ENCODE measurements at regions of chr7 and their contacts with region 1.

Region 1: DNA sequence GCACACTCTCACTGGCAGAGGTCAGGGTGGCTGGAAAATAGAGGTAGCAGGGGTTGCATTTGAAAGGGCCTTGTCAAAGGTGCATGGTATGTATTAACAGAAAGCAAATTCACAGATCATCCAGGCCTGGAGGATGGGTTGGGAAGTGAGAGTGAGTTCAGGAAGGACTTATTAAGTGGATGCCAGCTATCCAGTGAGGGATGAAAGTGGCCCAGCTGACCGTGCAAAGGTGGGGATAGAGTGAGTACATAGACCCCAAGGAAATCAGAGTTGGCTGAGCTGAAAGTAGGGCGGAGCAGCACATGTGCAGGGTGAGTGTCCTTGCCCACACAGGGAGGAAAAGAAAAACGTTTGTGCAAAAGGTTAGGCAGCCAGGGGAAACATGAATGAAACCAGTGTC is 58.1 kb downstream of the HECW1 start:
- DNase-seq: no peak

Region 2: GRCh38 chr7:42972699-42973500 is 197.7 kb before region 1 on chr7:
- intact Hi-C with region 1: loop called in 1 of 2 experiments (anchors 10 kb)
- DNase-seq: peak; percentile 87

Region 3: DNA sequence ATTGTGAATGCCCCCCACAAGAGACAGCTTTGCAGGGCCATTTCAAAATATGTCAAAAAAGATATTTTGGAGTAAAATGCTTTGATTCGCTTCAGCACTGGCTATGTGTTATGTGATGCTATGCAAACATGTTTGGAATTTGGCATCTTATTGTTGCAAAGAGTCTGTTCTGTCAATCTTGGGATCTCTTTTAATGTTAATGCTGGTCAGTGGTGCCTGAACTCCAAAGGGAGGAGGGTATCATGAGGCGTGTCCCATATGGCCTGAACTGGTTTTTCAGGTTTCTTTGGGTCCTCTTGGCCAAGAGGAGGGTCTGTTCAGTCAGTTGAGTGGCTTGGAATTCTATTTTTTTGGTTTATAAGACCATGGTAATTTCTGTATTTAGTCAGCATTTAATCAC is 23.3 kb after region 1 on chr7:
- intact Hi-C with region 1: loop called in 1 of 2 experiments (anchors 1 kb)
- DNase-seq: no peak

Region 4: GRCh38 chr7:43204081-43204480 is 33.5 kb after region 1 on chr7:
- intact Hi-C with region 1: no loop called
- DNase-seq: no peak

Region 5: GRCh38 chr7:44595934-44596635 is 1425.5 kb after region 1 on chr7:
- intact Hi-C with region 1: no loop called
- DNase-seq: no peak